Activated naive CD4-positive, alpha-beta T cell treated with anti-CD3 and anti-CD28 coated beads for 36 hours (primary cell): ENCODE measurements at regions of chr6 and their contacts with region 1.

Region 1: DNA sequence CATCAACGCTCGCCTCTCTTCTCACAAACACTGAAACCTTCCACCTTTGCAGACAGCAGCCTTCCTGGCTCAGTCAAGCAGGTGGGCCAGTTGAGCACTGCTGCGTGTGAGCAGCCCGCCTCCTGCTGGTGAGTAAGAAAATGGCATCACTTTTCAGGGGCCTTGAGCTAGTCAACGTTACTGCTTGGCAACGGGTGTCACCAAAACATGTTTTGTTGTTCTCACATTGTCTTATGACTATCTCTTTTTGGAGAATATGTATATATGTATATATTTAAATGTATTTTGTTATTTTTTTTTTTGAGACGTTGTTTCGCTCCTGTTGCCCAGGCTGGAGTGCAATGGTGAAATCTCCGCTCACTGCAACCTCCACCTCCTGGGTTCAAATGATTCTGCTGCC is 97.0 kb upstream of the AGPAT4 start:
- DNase-seq: peak; percentile 75
- H3K4me3 Mint-ChIP-seq: no peak overlapping the region
- H3K27ac Mint-ChIP-seq: no peak overlapping the region
- H3K4me1 Mint-ChIP-seq: no peaks in the 10 kb centered on the region
- H3K27me3 Mint-ChIP-seq: no peaks in the 10 kb centered on the region

Region 2: DNA sequence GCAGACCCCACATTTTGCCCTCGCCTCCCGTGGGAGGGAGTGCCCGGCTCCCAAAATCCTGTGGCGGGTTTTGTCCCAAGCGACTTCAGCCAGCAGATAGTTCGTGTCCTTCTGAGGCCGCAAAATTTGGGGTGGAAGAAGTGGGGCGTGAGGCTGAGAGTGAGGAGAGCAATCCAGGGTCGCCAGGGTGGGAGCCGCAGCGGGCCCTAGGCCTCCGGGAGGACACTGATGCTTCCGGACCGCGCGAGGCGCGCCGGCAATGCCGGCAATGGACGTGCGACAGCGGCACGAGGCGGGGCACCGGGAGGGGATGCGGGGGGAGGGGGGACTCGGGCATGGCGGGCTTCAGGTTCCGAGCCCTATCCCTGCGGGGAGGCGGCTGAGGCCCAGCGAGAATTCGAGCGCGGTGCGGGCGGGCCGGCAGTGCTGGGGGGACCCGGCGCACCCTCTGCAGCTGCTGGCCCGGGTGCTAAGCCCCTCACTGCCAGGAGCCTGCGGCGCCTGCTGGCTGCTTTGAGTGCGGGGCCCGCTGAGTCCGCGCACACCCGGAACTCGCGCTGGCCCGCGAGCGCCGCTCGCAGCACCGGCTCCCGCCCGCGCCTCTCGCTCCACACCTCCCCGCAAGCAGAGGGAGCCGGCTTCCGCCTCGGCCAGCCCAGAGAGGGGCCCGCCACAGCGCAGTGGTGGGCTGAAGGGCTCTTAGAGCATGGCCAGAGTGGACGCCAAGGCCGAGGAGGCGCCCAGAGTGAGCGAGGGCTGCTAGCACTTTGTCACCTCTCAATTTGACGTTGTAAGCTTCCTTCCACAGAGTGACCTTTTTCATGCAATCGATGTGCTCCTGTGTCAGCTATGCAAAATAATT is 850.6 kb before region 1 on chr6:
- CTCF ChIA-PET with region 1: no interaction called
- intact Hi-C with region 1: loop called (anchors 1 kb)
- DNase-seq: peak; percentile 45
- H3K4me3 Mint-ChIP-seq: peak overlapping the region; percentile 88
- H3K27ac Mint-ChIP-seq: peak overlapping the region; percentile 80
- H3K4me1 Mint-ChIP-seq: peaks cover 17% of the 10 kb centered on the region
- H3K27me3 Mint-ChIP-seq: no peaks in the 10 kb centered on the region

Region 3: GRCh38 chr6:160750276-160750689 is 620.6 kb before region 1 on chr6:
- CTCF ChIA-PET with region 1: interaction called, 5 read pairs
- intact Hi-C with region 1: loop called (anchors 1 kb)
- DNase-seq: peak; percentile 46
- H3K4me3 Mint-ChIP-seq: no peak overlapping the region
- H3K27ac Mint-ChIP-seq: no peak overlapping the region
- H3K4me1 Mint-ChIP-seq: no peaks in the 10 kb centered on the region
- H3K27me3 Mint-ChIP-seq: peaks cover 13% of the 10 kb centered on the region

Region 4: GRCh38 chr6:160930547-160931377 is 440.1 kb before region 1 on chr6:
- CTCF ChIA-PET with region 1: interaction called, 241 read pairs
- intact Hi-C with region 1: loop called (anchors 1 kb)
- DNase-seq: peak; percentile 60
- H3K4me3 Mint-ChIP-seq: no peak overlapping the region
- H3K27ac Mint-ChIP-seq: no peak overlapping the region
- H3K4me1 Mint-ChIP-seq: peaks cover 3% of the 10 kb centered on the region
- H3K27me3 Mint-ChIP-seq: peaks cover 33% of the 10 kb centered on the region

Region 5: GRCh38 chr6:161009991-161010390 is 360.9 kb before region 1 on chr6:
- CTCF ChIA-PET with region 1: no interaction called
- intact Hi-C with region 1: loop called (anchors 5 kb)
- DNase-seq: no peak
- H3K4me3 Mint-ChIP-seq: no peak overlapping the region
- H3K27ac Mint-ChIP-seq: no peak overlapping the region
- H3K4me1 Mint-ChIP-seq: peaks cover 35% of the 10 kb centered on the region
- H3K27me3 Mint-ChIP-seq: no peaks in the 10 kb centered on the region

Region 6: DNA sequence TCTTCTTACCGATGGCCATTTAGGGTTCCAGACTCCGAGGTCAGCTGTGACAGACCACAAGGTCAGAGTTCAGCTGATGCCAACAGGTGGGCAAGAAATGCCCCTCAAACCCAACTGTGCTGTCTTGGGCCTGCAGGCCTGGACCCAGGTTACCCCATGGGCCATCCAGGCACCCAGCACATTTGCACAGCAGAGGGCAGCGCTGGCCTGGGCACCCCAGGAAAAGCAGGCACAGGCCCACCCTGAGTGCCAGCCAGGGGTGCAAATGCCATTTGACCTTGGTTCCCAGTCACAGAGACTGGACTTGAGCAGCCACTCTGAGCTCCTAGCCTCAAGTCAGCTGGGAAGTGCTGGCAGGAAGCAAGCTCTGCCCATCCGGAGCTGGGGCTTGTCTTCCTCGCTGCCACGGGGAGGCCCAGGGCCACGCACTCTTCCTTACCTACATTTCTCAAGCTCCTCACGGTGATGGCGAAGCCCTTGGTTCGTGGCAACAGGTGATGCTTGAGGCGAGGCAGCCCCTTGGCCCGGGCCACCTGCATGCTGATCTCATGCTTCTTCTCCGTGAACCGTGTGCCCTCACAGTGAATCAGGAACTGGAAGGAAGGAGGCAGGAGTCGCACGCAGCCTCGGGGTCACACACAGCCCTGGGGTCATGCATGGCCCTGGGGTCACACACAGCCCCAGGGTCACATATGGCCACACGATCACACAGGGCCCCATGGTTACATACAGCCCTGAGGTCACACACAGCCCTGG is 217.8 kb before region 1 on chr6:
- CTCF ChIA-PET with region 1: interaction called, 7 read pairs
- intact Hi-C with region 1: loop called (anchors 1 kb)
- DNase-seq: peak; percentile 13
- H3K4me3 Mint-ChIP-seq: no peak overlapping the region
- H3K27ac Mint-ChIP-seq: no peak overlapping the region
- H3K4me1 Mint-ChIP-seq: no peaks in the 10 kb centered on the region
- H3K27me3 Mint-ChIP-seq: no peaks in the 10 kb centered on the region